Natural killer cell (primary cell): ENCODE measurements at regions of chr14 and their contacts with region 1.

Region 1: DNA sequence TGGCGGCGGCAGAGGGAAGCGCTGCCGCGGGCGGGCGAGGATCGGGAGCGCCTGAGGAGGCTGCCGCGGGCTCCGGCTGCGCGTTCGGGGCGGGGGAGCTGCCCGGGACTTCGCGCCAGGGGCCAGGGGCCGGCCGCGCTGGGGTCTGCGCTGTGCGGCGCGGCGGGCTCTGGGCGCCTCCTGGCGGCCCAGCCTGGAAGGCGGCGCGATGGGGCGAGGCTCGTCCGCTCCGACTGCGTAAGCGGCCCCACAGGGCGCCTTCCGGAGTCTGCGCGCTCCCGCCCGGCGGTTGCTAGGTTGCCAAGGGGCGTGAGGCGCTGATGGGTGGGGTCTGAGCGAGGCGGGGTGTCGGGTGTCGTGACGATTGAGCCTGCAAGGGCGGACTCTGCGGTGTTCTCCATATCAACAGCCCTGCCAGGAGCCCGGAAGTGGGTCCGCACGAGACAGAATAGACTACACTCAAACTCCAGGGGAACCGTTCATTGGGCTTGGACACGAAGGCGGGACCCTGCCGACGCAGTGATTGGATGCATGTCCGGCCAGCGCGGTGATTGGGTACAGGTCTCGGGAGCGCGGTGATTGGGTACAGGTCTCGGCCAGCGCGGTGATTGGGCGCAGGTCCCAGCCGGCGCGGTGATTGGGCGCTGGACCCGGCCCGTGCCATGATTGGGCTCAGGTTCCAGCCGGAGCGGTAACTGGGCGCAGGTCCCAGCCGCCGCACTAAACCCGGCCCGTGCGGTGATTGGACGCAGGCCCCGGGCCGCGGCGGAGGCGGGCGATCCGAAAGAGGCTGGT is at the start of gene TEDC1:
- DNase-seq: peak; percentile 98 to 100
- ATAC-seq: peak; percentile 65 to 85 (median 70)
- H3K4me3 ChIP-seq: peak within 1 kb of the TSS; percentile 72
- H3K4me3 Mint-ChIP-seq: peak within 1 kb of the TSS; percentile 91
- H3K27ac ChIP-seq: peak within 1 kb of the TSS; percentile 98
- H3K27ac Mint-ChIP-seq: peak within 1 kb of the TSS; percentile 94 to 100
- H3K4me1 ChIP-seq: peaks cover 49% of the 10 kb centered on the region
- H3K4me1 Mint-ChIP-seq: peaks cover 21 to 48% of the 10 kb centered on the region in 2 donors
- H3K27me3 ChIP-seq: no peaks in the 10 kb centered on the region
- H3K27me3 Mint-ChIP-seq: no peaks in the 10 kb centered on the region
- CTCF ChIP-seq: peak; percentile 74
- total RNA-seq, gene TEDC1: 70.0 to 233 (median 112) TPM

Region 2: GRCh38 chr14:105020815-105021655 is 469.7 kb before region 1 on chr14 and contains the start of gene CDCA4:
- intact Hi-C with region 1: loop called (anchors 1 kb)
- DNase-seq: peak; percentile 98
- ATAC-seq: peak; percentile 83 to 93 (median 84)
- H3K4me3 ChIP-seq: peak within 1 kb of the TSS; percentile 75
- H3K4me3 Mint-ChIP-seq: peak within 1 kb of the TSS; percentile 90
- H3K27ac ChIP-seq: peak within 1 kb of the TSS; percentile 77
- H3K27ac Mint-ChIP-seq: peak within 1 kb of the TSS; percentile 88 to 92
- H3K4me1 ChIP-seq: peaks cover 44% of the 10 kb centered on the region
- H3K4me1 Mint-ChIP-seq: peaks cover 35% of the 10 kb centered on the region in 2 donors
- H3K27me3 ChIP-seq: no peaks in the 10 kb centered on the region
- H3K27me3 Mint-ChIP-seq: no peaks in the 10 kb centered on the region
- CTCF ChIP-seq: no peak
- total RNA-seq, gene CDCA4: 10.3 to 20.7 (median 16.6) TPM

Region 3: GRCh38 chr14:105300792-105301533 is 189.8 kb before region 1 on chr14 and contains the start of gene BRF1:
- intact Hi-C with region 1: loop called (anchors 1 kb)
- DNase-seq: peak; percentile 97 to 98
- ATAC-seq: peak; percentile 87 to 95 (median 88)
- H3K4me3 ChIP-seq: peak within 1 kb of the TSS; percentile 71
- H3K4me3 Mint-ChIP-seq: peak within 1 kb of the TSS; percentile 94
- H3K27ac ChIP-seq: peak within 1 kb of the TSS; percentile 92
- H3K27ac Mint-ChIP-seq: peak within 1 kb of the TSS; percentile 81 to 93
- H3K4me1 ChIP-seq: peaks cover 31% of the 10 kb centered on the region
- H3K4me1 Mint-ChIP-seq: peaks cover 34% of the 10 kb centered on the region in 2 donors
- H3K27me3 ChIP-seq: no peaks in the 10 kb centered on the region
- H3K27me3 Mint-ChIP-seq: no peaks in the 10 kb centered on the region
- CTCF ChIP-seq: no peak
- total RNA-seq, gene BRF1: 82.4 to 92.7 (median 87.4) TPM

Region 4: DNA sequence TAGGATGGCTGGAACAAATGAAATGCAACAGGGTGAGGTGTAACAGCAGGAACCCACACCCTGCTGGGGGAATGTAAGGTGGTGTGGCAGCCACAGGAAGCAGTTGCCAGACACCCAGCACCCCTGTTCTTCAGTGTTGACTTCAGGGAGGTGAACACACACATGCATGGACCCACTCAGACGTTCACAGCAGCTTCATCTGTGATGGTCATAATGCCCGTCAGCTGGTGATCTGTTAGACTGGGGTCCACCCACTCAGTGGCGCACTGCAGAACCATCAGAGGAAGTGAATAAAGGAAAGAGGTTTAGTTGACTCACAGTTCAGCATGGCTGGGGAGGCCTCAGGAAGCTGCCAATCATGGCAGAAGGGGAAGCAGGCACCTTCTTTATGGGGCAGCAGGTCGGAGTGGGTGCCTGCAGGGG is 115.1 kb before region 1 on chr14:
- intact Hi-C with region 1: loop called (anchors 1 kb)
- DNase-seq: peak in 1 of 2 donors; percentile 29
- ATAC-seq: peak; percentile 81 to 84 (median 81)
- H3K4me3 ChIP-seq: no peak overlapping the region
- H3K4me3 Mint-ChIP-seq: peak overlapping the region; percentile 84
- H3K27ac ChIP-seq: peak overlapping the region; percentile 51
- H3K27ac Mint-ChIP-seq: peak overlapping the region; percentile 85 to 90
- H3K4me1 ChIP-seq: peaks cover 51% of the 10 kb centered on the region
- H3K4me1 Mint-ChIP-seq: peaks cover 16 to 17% of the 10 kb centered on the region in 2 donors
- H3K27me3 ChIP-seq: no peaks in the 10 kb centered on the region
- H3K27me3 Mint-ChIP-seq: no peaks in the 10 kb centered on the region
- CTCF ChIP-seq: no peak

Region 5: GRCh38 chr14:105398044-105398725 is 92.6 kb before region 1 on chr14 and contains the start of gene TEX22:
- intact Hi-C with region 1: loop called (anchors 5 kb)
- DNase-seq: peak; percentile 90 to 95
- ATAC-seq: peak; percentile 85 to 92 (median 87)
- H3K4me3 ChIP-seq: peak within 1 kb of the TSS; percentile 42
- H3K4me3 Mint-ChIP-seq: peak within 1 kb of the TSS; percentile 84
- H3K27ac ChIP-seq: peak within 1 kb of the TSS; percentile 85
- H3K27ac Mint-ChIP-seq: peak within 1 kb of the TSS; percentile 85 to 88
- H3K4me1 ChIP-seq: peaks cover 59% of the 10 kb centered on the region
- H3K4me1 Mint-ChIP-seq: peaks cover 16 to 54% of the 10 kb centered on the region in 2 donors
- H3K27me3 ChIP-seq: no peaks in the 10 kb centered on the region
- H3K27me3 Mint-ChIP-seq: no peaks in the 10 kb centered on the region
- CTCF ChIP-seq: no peak
- total RNA-seq, gene TEX22: 0.23 to 1.9 (median 1.8) TPM

Region 6: DNA sequence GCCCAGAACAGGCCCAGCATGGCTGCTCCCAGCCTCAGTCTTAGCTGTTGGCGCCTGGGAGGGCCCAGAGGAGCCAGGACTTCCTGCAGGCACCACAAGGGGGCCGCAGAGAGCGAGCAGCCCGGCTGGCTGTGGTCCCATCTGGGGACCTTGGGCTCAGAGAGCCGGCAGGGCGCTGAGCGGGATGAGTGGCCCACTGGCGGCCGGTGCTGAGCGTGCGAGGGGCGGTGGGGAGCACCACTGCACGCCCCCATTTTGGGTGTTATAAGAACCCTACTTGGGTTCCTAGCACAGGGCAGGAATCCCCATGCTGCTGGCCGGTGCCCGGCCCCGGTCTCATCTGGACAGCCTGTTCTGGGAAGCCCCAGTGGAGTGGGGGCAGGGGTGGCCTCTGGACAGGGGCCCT is 42.1 kb before region 1 on chr14:
- intact Hi-C with region 1: loop called (anchors 1 kb)
- DNase-seq: peak; percentile 68 to 82
- ATAC-seq: peak; percentile 76 to 99 (median 96)
- H3K4me3 ChIP-seq: no peak overlapping the region
- H3K4me3 Mint-ChIP-seq: no peak overlapping the region
- H3K27ac ChIP-seq: no peak overlapping the region
- H3K27ac Mint-ChIP-seq: no peak overlapping the region
- H3K4me1 ChIP-seq: no peaks in the 10 kb centered on the region
- H3K4me1 Mint-ChIP-seq: no peaks in the 10 kb centered on the region
- H3K27me3 ChIP-seq: no peaks in the 10 kb centered on the region
- H3K27me3 Mint-ChIP-seq: no peaks in the 10 kb centered on the region
- CTCF ChIP-seq: peak; percentile 67

Region 7: DNA sequence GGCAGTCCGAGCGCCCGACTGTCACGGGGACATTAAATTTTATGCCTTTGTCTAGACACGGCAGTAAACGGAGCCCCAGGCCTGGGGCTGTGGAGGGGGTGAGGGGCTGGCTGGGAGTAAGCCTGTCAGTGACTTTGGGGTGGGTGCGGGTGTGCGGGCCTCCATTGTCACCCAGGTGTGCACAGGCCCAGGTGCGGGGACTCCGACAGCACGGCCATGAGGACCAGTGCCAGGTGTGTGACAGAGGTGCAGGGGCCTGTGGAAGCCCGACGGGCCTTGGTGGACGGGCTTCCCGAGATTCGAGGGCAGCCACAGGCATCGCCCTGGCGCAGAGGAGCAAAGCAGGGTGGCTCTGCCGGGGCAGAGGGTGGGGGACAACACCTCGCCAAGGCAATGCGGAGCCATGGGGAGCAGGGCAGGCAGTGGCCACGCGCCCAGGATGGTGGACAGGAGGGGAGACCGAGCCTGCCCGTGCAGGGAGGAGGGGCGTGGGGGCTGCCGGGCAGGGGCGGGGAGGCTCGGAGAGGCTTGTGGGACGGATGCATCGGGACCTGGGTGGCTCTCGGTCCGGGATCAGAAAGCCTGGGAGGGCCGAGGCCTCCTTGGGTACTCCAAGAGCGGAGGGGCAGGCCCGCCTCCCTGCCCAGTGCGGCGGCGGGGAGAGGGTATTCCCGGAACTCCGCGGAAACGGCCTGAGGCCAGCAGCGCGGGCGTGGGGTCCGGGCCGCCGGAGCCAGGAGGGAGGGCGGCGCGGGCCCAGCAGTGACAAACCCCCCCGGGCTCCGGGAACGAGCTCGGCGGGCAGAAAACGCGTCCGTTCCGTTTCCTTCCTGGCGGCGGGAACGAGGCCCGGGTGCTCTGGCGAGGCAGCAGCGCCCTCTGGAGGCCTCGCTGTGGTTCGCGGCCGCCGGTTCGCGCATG is 37.2 kb after region 1 on chr14:
- intact Hi-C with region 1: loop called (anchors 5 kb)
- DNase-seq: peak; percentile 82 to 92
- ATAC-seq: peak; percentile 82 to 86 (median 84)
- H3K4me3 ChIP-seq: peak overlapping the region; percentile 27
- H3K4me3 Mint-ChIP-seq: peak overlapping the region; percentile 87
- H3K27ac ChIP-seq: no peak overlapping the region
- H3K27ac Mint-ChIP-seq: peak overlapping the region in 1 of 2 donors; percentile 60
- H3K4me1 ChIP-seq: peaks cover 56% of the 10 kb centered on the region
- H3K4me1 Mint-ChIP-seq: peaks cover 4 to 23% of the 10 kb centered on the region in 2 donors
- H3K27me3 ChIP-seq: peaks cover 15% of the 10 kb centered on the region
- H3K27me3 Mint-ChIP-seq: peaks cover 4 to 45% of the 10 kb centered on the region in 2 donors
- CTCF ChIP-seq: peak; percentile 91

Region 8: GRCh38 chr14:105861985-105862465 is 371.3 kb after region 1 on chr14:
- intact Hi-C with region 1: no loop called
- DNase-seq: peak; percentile 13 to 47
- ATAC-seq: peak in 2 of 3 donors; percentile 31 to 57
- H3K4me3 ChIP-seq: peak overlapping the region; percentile 51
- H3K4me3 Mint-ChIP-seq: peak overlapping the region; percentile 50
- H3K27ac ChIP-seq: peak overlapping the region; percentile 84
- H3K27ac Mint-ChIP-seq: no peak overlapping the region
- H3K4me1 ChIP-seq: peaks cover 54% of the 10 kb centered on the region
- H3K4me1 Mint-ChIP-seq: peaks cover 21 to 25% of the 10 kb centered on the region in 2 donors
- H3K27me3 ChIP-seq: peaks cover 2% of the 10 kb centered on the region
- H3K27me3 Mint-ChIP-seq: peaks cover 38 to 43% of the 10 kb centered on the region in 2 donors
- CTCF ChIP-seq: no peak